CD4-positive, alpha-beta memory T cell (primary cell): ENCODE measurements at regions of chr10 and their contacts with region 1.

Region 1: GRCh38 chr10:100998991-100999741 is 442 bp upstream of the LZTS2 start:
- DNase-seq: peak; percentile 73 to 86 (median 79)
- H3K4me3 ChIP-seq: peak overlapping the region; percentile 64 to 73
- H3K4me3 Mint-ChIP-seq: peak overlapping the region; percentile 84 to 98 (median 91)
- H3K27ac ChIP-seq: peak overlapping the region; percentile 83
- H3K27ac Mint-ChIP-seq: peak overlapping the region; percentile 82 to 96 (median 94)
- H3K4me1 ChIP-seq: peaks cover 24% of the 10 kb centered on the region
- H3K4me1 Mint-ChIP-seq: peaks cover 15 to 34% (median 24%) of the 10 kb centered on the region in 4 donors
- H3K27me3 ChIP-seq: no peaks in the 10 kb centered on the region
- H3K27me3 Mint-ChIP-seq: no peaks in the 10 kb centered on the region

Region 2: GRCh38 chr10:100535715-100536353 is 463.3 kb before region 1 on chr10 and contains the start of gene HIF1AN:
- CTCF ChIA-PET with region 1: no interaction called
- POLR2A ChIA-PET with region 1: no interaction called
- intact Hi-C with region 1: loop called (anchors 10 kb)
- DNase-seq: peak; percentile 92 to 95 (median 94)
- H3K4me3 ChIP-seq: peak within 1 kb of the TSS; percentile 48 to 69
- H3K4me3 Mint-ChIP-seq: peak within 1 kb of the TSS in 1 of 8 donors; percentile 40
- H3K27ac ChIP-seq: peak within 1 kb of the TSS; percentile 77
- H3K27ac Mint-ChIP-seq: peak within 1 kb of the TSS in 3 of 7 donors; percentile 8 to 87 (median 32)
- H3K4me1 ChIP-seq: peaks cover 34% of the 10 kb centered on the region
- H3K4me1 Mint-ChIP-seq: peaks cover 12 to 23% (median 18%) of the 10 kb centered on the region in 4 donors
- H3K27me3 ChIP-seq: no peaks in the 10 kb centered on the region
- H3K27me3 Mint-ChIP-seq: no peaks in the 10 kb centered on the region
- total RNA-seq, gene HIF1AN: 69.6 to 69.8 TPM

Region 3: DNA sequence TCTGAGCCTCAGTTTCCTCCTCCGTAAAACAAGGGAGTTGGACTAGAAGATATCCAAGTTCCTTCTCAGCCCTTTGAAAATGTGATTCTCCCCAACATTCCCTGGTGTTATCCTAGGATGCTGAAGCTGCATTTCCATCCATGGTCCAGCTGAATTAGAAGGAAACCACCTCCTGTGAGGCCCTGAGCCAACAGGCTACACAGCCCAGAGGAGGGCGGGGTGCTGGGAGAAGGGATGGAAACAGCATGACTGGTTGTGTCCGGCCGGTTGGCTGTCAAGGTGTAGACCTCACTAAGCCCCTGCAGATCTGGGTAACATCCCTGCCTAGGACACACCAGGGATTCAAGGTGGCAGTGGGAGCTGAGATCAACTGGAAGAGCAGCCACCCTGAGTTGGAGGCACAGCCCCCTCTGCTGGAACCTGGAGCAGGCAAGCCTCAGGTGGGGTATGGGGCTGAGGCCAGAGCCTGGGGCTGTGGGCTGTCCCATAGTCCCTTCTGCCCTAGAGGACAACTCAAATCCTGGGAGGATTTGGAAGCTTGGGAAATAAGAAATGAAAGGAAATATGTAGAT is 181.8 kb before region 1 on chr10:
- CTCF ChIA-PET with region 1: no interaction called
- POLR2A ChIA-PET with region 1: no interaction called
- intact Hi-C with region 1: no loop called
- DNase-seq: no peak
- H3K4me3 ChIP-seq: no peak overlapping the region
- H3K4me3 Mint-ChIP-seq: no peak overlapping the region
- H3K27ac ChIP-seq: no peak overlapping the region
- H3K27ac Mint-ChIP-seq: no peak overlapping the region
- H3K4me1 ChIP-seq: no peaks in the 10 kb centered on the region
- H3K4me1 Mint-ChIP-seq: no peaks in the 10 kb centered on the region
- H3K27me3 ChIP-seq: no peaks in the 10 kb centered on the region
- H3K27me3 Mint-ChIP-seq: peaks cover 32 to 55% of the 10 kb centered on the region in 2 donors

Region 4: GRCh38 chr10:100912605-100913469 is 86.3 kb before region 1 on chr10 and contains the start of gene SLF2:
- CTCF ChIA-PET with region 1: interaction called, 3 read pairs
- POLR2A ChIA-PET with region 1: interaction called, 13 read pairs
- intact Hi-C with region 1: loop called (anchors 2 kb)
- DNase-seq: peak; percentile 89 to 92 (median 90)
- H3K4me3 ChIP-seq: peak within 1 kb of the TSS; percentile 52 to 70
- H3K4me3 Mint-ChIP-seq: peak within 1 kb of the TSS; percentile 91 to 100 (median 99)
- H3K27ac ChIP-seq: peak within 1 kb of the TSS; percentile 82
- H3K27ac Mint-ChIP-seq: peak within 1 kb of the TSS; percentile 90 to 99 (median 99)
- H3K4me1 ChIP-seq: peaks cover 27% of the 10 kb centered on the region
- H3K4me1 Mint-ChIP-seq: peaks cover 29 to 53% (median 41%) of the 10 kb centered on the region in 4 donors
- H3K27me3 ChIP-seq: no peaks in the 10 kb centered on the region
- H3K27me3 Mint-ChIP-seq: no peaks in the 10 kb centered on the region
- total RNA-seq, gene SLF2: 46.3 to 49.3 TPM

Region 5: GRCh38 chr10:100986952-100987750 is 12.0 kb before region 1 on chr10 and contains the starts of genes MRPL43 and TWNK:
- CTCF ChIA-PET with region 1: interaction called, 46 read pairs
- POLR2A ChIA-PET with region 1: interaction called, 84 read pairs
- intact Hi-C with region 1: loop called (anchors 1 kb)
- DNase-seq: peak; percentile 83 to 90 (median 86)
- H3K4me3 ChIP-seq: peak within 1 kb of the TSS; percentile 67 to 91
- H3K4me3 Mint-ChIP-seq: peak within 1 kb of the TSS; percentile 85 to 98 (median 94)
- H3K27ac ChIP-seq: peak within 1 kb of the TSS; percentile 71
- H3K27ac Mint-ChIP-seq: peak within 1 kb of the TSS; percentile 41 to 97 (median 92)
- H3K4me1 ChIP-seq: peaks cover 25% of the 10 kb centered on the region
- H3K4me1 Mint-ChIP-seq: peaks cover 16 to 44% (median 32%) of the 10 kb centered on the region in 4 donors
- H3K27me3 ChIP-seq: no peaks in the 10 kb centered on the region
- H3K27me3 Mint-ChIP-seq: no peaks in the 10 kb centered on the region
- total RNA-seq, gene MRPL43: 65.8 to 71.6 TPM
- total RNA-seq, gene TWNK: 11.5 to 14.3 TPM

Region 6: DNA sequence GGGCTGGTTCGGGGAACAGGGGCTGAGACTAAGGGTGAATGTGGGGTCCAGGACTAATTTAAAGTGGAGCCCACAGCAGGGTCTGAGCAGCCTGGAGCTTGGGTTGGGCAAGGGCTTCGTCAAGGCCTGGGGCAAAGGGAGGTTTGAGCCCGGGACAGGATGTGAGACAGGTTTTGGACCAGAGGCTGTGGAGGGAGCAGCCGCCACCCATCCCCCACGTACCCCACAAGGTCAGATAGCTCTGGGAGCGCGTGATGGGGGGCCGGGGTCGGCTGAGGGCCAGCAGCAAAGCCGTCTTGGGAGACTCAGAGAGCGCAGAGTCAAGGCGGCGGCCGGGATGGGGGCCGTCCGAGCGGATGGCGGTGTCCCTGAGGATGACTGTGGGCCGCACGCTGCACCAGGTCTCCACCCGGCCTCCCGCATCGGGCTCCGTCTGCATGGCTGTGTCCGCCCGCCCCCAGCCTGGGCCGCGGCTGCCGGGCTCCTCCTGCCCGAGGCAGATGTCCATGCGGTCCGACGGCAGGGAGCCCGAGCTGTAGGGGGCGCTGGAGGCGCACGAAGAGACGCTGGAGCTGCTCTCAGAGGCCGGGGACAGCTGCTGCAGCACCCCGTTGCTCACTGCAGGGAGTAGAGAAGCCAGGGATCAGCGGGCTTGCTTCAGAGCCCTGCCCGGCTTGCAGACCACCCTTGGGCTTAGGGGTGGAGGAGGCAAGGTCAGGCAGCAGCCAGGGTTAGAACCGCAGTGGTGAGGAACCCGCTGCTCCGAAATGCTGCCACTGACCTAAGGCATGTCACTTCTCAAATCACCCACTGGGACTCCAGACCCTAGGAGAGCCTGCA is 19.7 kb after region 1 on chr10:
- CTCF ChIA-PET with region 1: interaction called, 171 read pairs
- POLR2A ChIA-PET with region 1: interaction called, 19 read pairs
- intact Hi-C with region 1: loop called (anchors 1 kb)
- DNase-seq: peak; percentile 53 to 68 (median 59)
- H3K4me3 ChIP-seq: no peak overlapping the region
- H3K4me3 Mint-ChIP-seq: no peak overlapping the region
- H3K27ac ChIP-seq: no peak overlapping the region
- H3K27ac Mint-ChIP-seq: no peak overlapping the region
- H3K4me1 ChIP-seq: peaks cover 7% of the 10 kb centered on the region
- H3K4me1 Mint-ChIP-seq: peaks cover 5 to 10% (median 6%) of the 10 kb centered on the region in 4 donors
- H3K27me3 ChIP-seq: peaks cover 11% of the 10 kb centered on the region
- H3K27me3 Mint-ChIP-seq: peaks cover 25 to 32% of the 10 kb centered on the region in 2 donors

Region 7: GRCh38 chr10:101042667-101043355 is 43.6 kb after region 1 on chr10:
- CTCF ChIA-PET with region 1: interaction called, 21 read pairs
- POLR2A ChIA-PET with region 1: interaction called, 25 read pairs
- intact Hi-C with region 1: no loop called
- DNase-seq: peak; percentile 64 to 84 (median 68)
- H3K4me3 ChIP-seq: peak overlapping the region; percentile 81 to 94
- H3K4me3 Mint-ChIP-seq: peak overlapping the region; percentile 92 to 99 (median 97)
- H3K27ac ChIP-seq: peak overlapping the region; percentile 68
- H3K27ac Mint-ChIP-seq: peak overlapping the region; percentile 87 to 99 (median 97)
- H3K4me1 ChIP-seq: peaks cover 27% of the 10 kb centered on the region
- H3K4me1 Mint-ChIP-seq: peaks cover 16 to 25% (median 19%) of the 10 kb centered on the region in 4 donors
- H3K27me3 ChIP-seq: peaks cover under 1% of the 10 kb centered on the region
- H3K27me3 Mint-ChIP-seq: peaks cover 11 to 12% of the 10 kb centered on the region in 2 donors

Region 8: GRCh38 chr10:101060036-101060950 is 61.1 kb after region 1 on chr10:
- CTCF ChIA-PET with region 1: interaction called, 15 read pairs
- POLR2A ChIA-PET with region 1: interaction called, 8 read pairs
- intact Hi-C with region 1: loop called (anchors 1 kb)
- DNase-seq: peak; percentile 80 to 98 (median 94)
- H3K4me3 ChIP-seq: peak overlapping the region; percentile 99 to 100
- H3K4me3 Mint-ChIP-seq: peak overlapping the region; percentile 92 to 98 (median 95)
- H3K27ac ChIP-seq: peak overlapping the region; percentile 92
- H3K27ac Mint-ChIP-seq: peak overlapping the region; percentile 88 to 99 (median 98)
- H3K4me1 ChIP-seq: peaks cover 28% of the 10 kb centered on the region
- H3K4me1 Mint-ChIP-seq: peaks cover 14 to 35% (median 22%) of the 10 kb centered on the region in 4 donors
- H3K27me3 ChIP-seq: peaks cover 23% of the 10 kb centered on the region
- H3K27me3 Mint-ChIP-seq: peaks cover 14 to 17% of the 10 kb centered on the region in 2 donors

Region 9: GRCh38 chr10:101405001-101405400 is 405.8 kb after region 1 on chr10:
- CTCF ChIA-PET with region 1: no interaction called
- POLR2A ChIA-PET with region 1: no interaction called
- intact Hi-C with region 1: no loop called
- DNase-seq: no peak
- H3K4me3 ChIP-seq: no peak overlapping the region
- H3K4me3 Mint-ChIP-seq: no peak overlapping the region
- H3K27ac ChIP-seq: no peak overlapping the region
- H3K27ac Mint-ChIP-seq: no peak overlapping the region
- H3K4me1 ChIP-seq: no peaks in the 10 kb centered on the region
- H3K4me1 Mint-ChIP-seq: peaks cover 4 to 15% (median 8%) of the 10 kb centered on the region in 4 donors
- H3K27me3 ChIP-seq: no peaks in the 10 kb centered on the region
- H3K27me3 Mint-ChIP-seq: no peaks in the 10 kb centered on the region